ENCODE measurements at regions of chr14 and their contacts with region 1.

Region 1: DNA sequence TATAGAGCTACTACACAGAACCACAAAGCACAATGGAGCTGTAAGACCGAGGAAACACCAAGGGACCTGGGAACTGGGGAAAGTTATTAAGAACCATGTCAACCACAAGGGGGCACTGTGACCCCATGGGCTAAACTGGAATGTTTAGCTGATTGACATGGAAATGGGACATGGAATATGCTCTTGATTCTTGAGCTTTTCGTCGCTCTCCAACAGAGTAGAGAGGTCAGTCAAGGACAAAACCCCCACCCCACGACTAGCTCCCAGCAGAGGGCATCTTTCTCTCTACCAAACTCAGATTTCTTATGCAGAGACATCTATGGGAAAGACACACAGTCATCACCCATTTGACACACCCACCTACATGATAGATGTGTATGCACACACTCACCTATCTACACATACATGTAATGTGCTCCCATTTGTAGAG is 10.1 kb downstream of the NDRG2 start:
- DNase-seq: peak; percentile 80
- ATAC-seq: peak; percentile 97
- H3K4me3 ChIP-seq: no peak overlapping the region
- H3K27ac ChIP-seq: no peak overlapping the region
- H3K4me1 ChIP-seq: peaks cover 0 to 4% of the 10 kb centered on the region in 2 experiments; a peak in 1 of 4 replicates
- H3K27me3 ChIP-seq: peaks cover 18% of the 10 kb centered on the region; the same call in 1 of the 2 replicates
- CTCF ChIP-seq: peak; percentile 86 to 95 (median 95)
- POLR2A ChIP-seq: no peak
- RAD21 ChIP-seq: peak; percentile 94

Region 2: DNA sequence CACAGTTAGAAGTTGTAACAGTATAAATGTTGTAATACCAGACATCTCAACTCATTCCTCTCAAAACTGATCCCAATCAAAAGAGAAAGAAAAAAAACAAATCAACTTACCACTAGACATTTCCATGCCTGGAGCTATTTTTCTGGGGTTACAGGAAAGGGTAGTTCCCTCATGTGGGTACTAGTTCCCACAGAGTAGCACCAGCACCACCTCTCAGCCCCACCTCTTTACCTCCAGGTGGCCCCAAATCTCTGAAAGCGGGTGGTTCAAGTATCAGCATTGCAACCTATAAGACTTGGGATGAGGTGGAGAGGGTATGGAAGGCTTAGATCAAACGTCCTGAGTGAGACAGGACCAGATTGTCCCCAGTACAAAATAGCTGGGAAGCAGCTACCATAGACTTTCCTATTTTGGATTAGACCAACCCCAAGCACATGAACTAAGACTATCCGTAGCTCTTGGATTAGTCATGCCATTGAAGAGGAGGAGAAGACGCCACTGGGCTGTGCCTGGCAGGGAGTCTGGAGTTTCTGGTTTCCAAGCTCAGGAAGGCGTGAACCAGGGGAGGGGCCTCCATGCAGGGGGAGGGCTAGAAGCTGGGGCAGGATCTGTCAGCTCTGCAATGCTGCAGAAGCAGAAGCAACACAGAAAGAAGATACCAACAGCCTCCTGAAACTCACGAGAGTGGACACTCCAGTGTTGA is 16.0 kb before region 1 on chr14 and contains the start of gene SLC39A2:
- CTCF ChIA-PET with region 1: interaction called, 19 read pairs
- POLR2A ChIA-PET with region 1: no interaction called
- RAD21 ChIA-PET with region 1: no interaction called
- intact Hi-C with region 1: no loop called
- DNase-seq: peak; percentile 33
- ATAC-seq: peak; percentile 96
- H3K4me3 ChIP-seq: 0 out of 4 replicates have a peak within 1 kb of the TSS, but pooled peaks of 1 of the 2 experiments have one; percentile 7
- H3K27ac ChIP-seq: no peak within 1 kb of the TSS
- H3K4me1 ChIP-seq: peaks cover 7 to 13% of the 10 kb centered on the region in 2 experiments; a peak in 3 of 4 replicates
- H3K27me3 ChIP-seq: no peaks in the 10 kb centered on the region
- CTCF ChIP-seq: no peak
- POLR2A ChIP-seq: no peak
- RAD21 ChIP-seq: no peak
- total RNA-seq, gene SLC39A2: not detected

Region 3: GRCh38 chr14:21024585-21025370 is 10.0 kb after region 1 on chr14 and contains the start of gene NDRG2:
- CTCF ChIA-PET with region 1: interaction called, 10 read pairs
- POLR2A ChIA-PET with region 1: no interaction called
- RAD21 ChIA-PET with region 1: no interaction called
- intact Hi-C with region 1: no loop called
- DNase-seq: no peak
- ATAC-seq: peak; percentile 90
- H3K4me3 ChIP-seq: peak within 1 kb of the TSS; percentile 66 to 72
- H3K27ac ChIP-seq: peak within 1 kb of the TSS; percentile 46; the same call in 1 of the 2 replicates
- H3K4me1 ChIP-seq: peaks cover 14 to 21% of the 10 kb centered on the region in 2 experiments; a peak in 3 of 4 replicates
- H3K27me3 ChIP-seq: no peaks in the 10 kb centered on the region
- CTCF ChIP-seq: no peak
- POLR2A ChIP-seq: no peak
- RAD21 ChIP-seq: no peak
- total RNA-seq, gene NDRG2: 18.9 TPM

Region 4: DNA sequence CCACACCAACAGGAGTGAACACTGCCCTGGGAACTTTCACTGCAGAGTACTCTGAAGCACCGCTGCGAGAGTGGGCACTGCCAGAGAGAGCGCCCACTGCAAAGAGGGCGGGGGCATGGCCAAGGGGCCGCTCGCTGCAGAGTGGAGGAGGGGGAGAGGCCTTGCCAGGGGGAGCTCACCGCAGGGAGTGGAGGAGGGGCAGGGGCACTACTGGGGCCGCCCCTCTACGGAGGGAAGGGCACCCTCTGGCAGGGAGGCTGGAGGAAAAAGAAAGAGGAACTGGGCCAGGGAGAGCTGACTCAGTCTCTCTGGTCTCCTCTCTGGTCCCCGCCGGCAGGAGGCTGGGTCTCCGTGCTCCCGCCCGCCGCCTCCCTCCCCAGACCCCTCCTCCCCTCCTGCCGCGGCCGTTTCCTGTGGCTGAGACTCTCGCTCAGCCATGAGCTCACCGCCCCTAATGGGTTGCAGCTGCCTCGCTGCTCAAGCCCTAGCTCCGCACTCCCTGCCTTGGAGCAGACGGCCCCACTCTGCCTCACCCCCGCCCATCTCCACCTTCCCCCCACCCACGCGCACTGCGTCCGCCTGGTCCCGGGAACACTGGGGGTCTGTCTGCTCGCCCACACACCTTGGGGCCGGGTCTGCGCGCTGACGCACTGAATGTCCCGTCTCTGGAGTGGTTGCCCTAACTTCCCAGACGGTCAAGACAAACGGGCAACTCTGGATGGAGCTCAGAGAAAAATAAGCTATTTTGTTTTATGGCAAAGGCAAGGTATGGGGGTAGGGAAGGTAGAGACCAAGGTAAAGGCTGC is 56.7 kb after region 1 on chr14:
- CTCF ChIA-PET with region 1: interaction called, 21 read pairs
- POLR2A ChIA-PET with region 1: interaction called, 3 read pairs
- RAD21 ChIA-PET with region 1: interaction called, 3 to 6 read pairs
- intact Hi-C with region 1: no loop called
- DNase-seq: no peak
- ATAC-seq: no peak
- H3K4me3 ChIP-seq: peak overlapping the region; percentile 61 to 74
- H3K27ac ChIP-seq: no peak overlapping the region
- H3K4me1 ChIP-seq: peaks cover 7 to 28% of the 10 kb centered on the region in 2 experiments
- H3K27me3 ChIP-seq: 0 out of 2 replicates have a peak, but pooled peaks cover 4% of the 10 kb centered on the region
- CTCF ChIP-seq: no peak
- POLR2A ChIP-seq: no peak
- RAD21 ChIP-seq: no peak

Region 5: DNA sequence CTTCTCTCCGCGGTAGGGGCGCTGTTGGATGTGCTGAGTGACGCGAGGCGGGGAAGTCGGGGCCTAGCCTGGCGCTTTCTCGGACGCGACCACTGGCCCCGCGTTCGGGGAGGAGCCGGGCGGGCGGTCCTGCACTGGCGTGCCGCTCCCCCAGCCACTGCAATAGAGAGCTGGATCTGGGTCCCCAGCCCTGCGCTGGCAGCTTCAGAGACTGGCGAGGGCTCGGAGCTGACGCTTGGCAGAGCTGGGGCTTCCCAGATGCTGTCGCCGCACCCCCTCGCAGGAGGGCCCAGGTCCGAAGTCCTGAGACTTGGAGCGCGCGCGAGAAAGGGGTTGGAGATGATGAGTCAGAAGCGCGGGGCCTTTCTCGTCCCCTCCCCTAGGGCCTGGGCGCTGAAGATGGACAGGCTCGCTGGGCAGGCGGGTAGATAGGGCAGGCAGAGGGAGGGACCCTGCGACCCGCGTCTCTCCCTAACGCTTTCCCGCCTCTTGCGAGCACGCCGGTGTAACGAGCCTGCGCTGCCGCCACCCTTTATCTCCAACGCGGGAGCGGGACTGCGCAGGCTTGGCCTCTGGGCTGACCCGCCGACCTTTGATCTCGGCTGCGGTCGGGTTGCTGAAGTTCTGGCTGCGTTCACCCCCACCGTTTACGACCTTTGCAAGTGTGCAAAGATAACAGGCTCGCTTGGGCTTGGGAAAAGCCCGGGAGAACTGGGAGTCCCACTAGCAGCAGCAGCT is 89.1 kb after region 1 on chr14:
- CTCF ChIA-PET with region 1: interaction called, 60 read pairs
- POLR2A ChIA-PET with region 1: interaction called, 5 read pairs
- RAD21 ChIA-PET with region 1: interaction called, 6 to 10 read pairs
- intact Hi-C with region 1: loop called (anchors 1 kb)
- DNase-seq: peak; percentile 90
- ATAC-seq: peak; percentile 83
- H3K4me3 ChIP-seq: peak overlapping the region; percentile 69 to 74
- H3K27ac ChIP-seq: peak overlapping the region; percentile 95
- H3K4me1 ChIP-seq: peaks cover 56 to 80% of the 10 kb centered on the region in 2 experiments
- H3K27me3 ChIP-seq: no peaks in the 10 kb centered on the region
- CTCF ChIP-seq: peak in 2 of 3 experiments; percentile 68 to 76; a peak in 3 of 6 replicates
- POLR2A ChIP-seq: peak; percentile 64
- RAD21 ChIP-seq: no peak